K562 (cell line): ENCODE measurements at regions of chr17 and their contacts with region 1.

Region 1: DNA sequence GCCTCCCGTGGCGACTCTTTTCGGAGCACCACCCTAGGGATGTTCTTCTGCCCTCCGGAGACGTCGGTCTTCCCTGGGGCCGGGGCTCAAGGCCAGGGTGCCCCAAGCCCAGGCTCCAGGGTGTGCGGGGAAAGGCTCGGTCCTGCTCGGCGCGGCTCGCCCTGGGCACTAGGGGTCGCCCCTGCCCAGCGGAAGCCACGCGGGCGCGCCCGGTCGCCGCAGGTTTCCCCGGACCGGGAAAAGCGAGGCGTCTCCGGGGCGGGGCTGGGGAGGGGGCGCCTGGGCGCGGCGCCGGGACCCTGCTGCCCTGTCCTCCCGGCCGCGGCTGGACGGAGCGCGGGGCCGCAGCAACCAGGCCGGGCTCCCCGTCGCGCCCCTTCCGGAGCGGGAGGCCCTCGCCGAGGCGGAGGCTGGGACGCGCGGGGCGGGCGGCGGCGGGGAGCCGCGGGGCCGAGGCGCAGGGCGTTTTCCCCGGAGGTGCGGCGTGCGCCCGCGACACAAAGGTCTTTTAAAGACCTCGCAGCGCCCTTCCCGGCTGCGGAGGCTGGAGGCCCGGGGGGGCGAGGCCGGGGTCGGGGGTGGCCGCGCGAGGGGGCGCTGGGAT is 76.4 kb downstream of the MRC2 start:
- DNase-seq: peak; percentile 72 to 84 (median 78)
- ATAC-seq: peak; percentile 96
- H3K4me3 ChIP-seq: peak overlapping the region; percentile 58
- H3K27ac ChIP-seq: peak overlapping the region; percentile 36; the same call in 1 of the 3 replicates
- H3K4me1 ChIP-seq: peaks cover 4 to 21% of the 10 kb centered on the region in 2 experiments; a peak in 4 of 5 replicates
- H3K27me3 ChIP-seq: peaks cover 8 to 29% of the 10 kb centered on the region in 2 experiments; a peak in 3 of 5 replicates
- CTCF ChIP-seq: peak; percentile 74 to 87 (median 84)
- EP300 ChIP-seq: no peak
- POLR2A ChIP-seq: no peak
- RAD21 ChIP-seq: peak; percentile 92 to 94

Region 2: GRCh38 chr17:62637809-62638208 is 66.1 kb before region 1 on chr17:
- CTCF ChIA-PET with region 1: no interaction called
- POLR2A ChIA-PET with region 1: no interaction called
- in situ Hi-C with region 1: no loop called
- intact Hi-C with region 1: no loop called
- DNase-seq: peak in 1 of 4 experiments; percentile 75
- ATAC-seq: peak; percentile 67
- H3K4me3 ChIP-seq: no peak overlapping the region
- H3K27ac ChIP-seq: no peak overlapping the region
- H3K4me1 ChIP-seq: peaks cover 0 to 5% of the 10 kb centered on the region in 2 experiments; a peak in 3 of 5 replicates
- H3K27me3 ChIP-seq: no peaks in the 10 kb centered on the region
- CTCF ChIP-seq: peak; percentile 57 to 71 (median 66)
- EP300 ChIP-seq: no peak
- POLR2A ChIP-seq: no peak
- RAD21 ChIP-seq: peak in 1 of 2 experiments; percentile 72; a peak in 3 of 4 replicates

Region 3: DNA sequence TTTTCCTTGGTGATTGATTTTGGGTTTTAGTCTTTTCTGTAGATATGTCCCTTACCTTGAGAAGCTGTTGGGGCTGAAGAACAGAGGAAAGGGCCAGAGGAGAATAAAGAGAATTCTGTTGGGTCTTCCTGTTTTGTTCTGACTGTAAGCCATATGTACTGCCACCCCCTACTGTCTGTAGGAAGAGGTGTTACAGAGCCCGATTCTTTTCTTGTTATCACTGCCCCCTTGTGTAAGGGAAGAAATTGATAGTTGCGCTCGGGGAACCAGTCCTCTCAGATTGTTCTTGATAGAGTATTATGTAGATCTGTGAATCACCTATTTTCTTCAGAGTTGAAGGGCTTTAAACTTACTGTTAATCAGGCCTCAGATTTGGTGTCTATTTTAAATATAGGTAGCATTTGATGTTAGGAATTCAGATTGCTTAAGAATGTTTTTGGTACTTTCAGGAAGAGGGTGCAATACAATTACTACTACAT is 264.6 kb after region 1 on chr17:
- CTCF ChIA-PET with region 1: interaction called, 14 read pairs
- POLR2A ChIA-PET with region 1: interaction called, 4 read pairs
- in situ Hi-C with region 1: loop called (anchors 25 kb)
- intact Hi-C with region 1: loop called (anchors 1 kb)
- DNase-seq: peak; percentile 80 to 88 (median 82)
- ATAC-seq: peak; percentile 87
- H3K4me3 ChIP-seq: no peak overlapping the region
- H3K27ac ChIP-seq: no peak overlapping the region
- H3K4me1 ChIP-seq: peaks cover 12 to 16% of the 10 kb centered on the region in 2 experiments; a peak in 4 of 5 replicates
- H3K27me3 ChIP-seq: no peaks in the 10 kb centered on the region; a peak in 1 of 5 replicates
- CTCF ChIP-seq: peak; percentile 88 to 99 (median 99)
- EP300 ChIP-seq: no peak; the same call in 1 of the 2 replicates
- POLR2A ChIP-seq: no peak
- RAD21 ChIP-seq: peak; percentile 95 to 97